ENCODE measurements at regions of chr16 and their contacts with region 1.

Region 1: DNA sequence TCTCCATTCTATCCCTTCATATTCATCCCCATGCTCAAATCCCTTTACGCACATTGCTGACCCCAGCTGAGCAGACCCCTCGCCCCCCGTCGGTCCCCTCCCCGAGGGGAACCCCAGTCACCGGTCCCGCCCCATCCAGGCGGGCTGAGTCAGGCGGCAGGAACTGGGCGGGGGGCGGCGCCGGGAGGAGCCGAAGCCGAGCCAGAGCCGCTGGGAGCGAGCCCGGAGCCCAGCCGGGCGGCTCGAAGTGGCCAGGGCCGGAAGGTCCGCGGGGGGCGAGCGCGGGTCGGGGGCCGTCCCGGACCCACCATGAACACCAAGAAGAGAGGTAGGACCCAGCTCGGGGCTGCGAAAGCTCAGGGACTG is 8.6 kb downstream of the RIPOR1 start:
- DNase-seq: peak; percentile 62
- ATAC-seq: peak; percentile 56
- H3K4me3 Mint-ChIP-seq: peak overlapping the region; percentile 76
- H3K27ac Mint-ChIP-seq: no peak overlapping the region
- H3K4me1 Mint-ChIP-seq: peaks cover 14% of the 10 kb centered on the region
- H3K27me3 Mint-ChIP-seq: peaks cover 96% of the 10 kb centered on the region
- CTCF ChIP-seq: no peak

Region 2: GRCh38 chr16:67571981-67572431 is 34.8 kb after region 1 on chr16:
- CTCF ChIA-PET with region 1: no interaction called
- POLR2A ChIA-PET with region 1: no interaction called
- DNase-seq: no peak
- ATAC-seq: no peak
- H3K4me3 Mint-ChIP-seq: no peak overlapping the region
- H3K27ac Mint-ChIP-seq: no peak overlapping the region
- H3K4me1 Mint-ChIP-seq: peaks cover 3% of the 10 kb centered on the region; the same call in 1 of the 2 replicates
- H3K27me3 Mint-ChIP-seq: no peaks in the 10 kb centered on the region
- CTCF ChIP-seq: no peak

Region 3: GRCh38 chr16:67595033-67595355 is 57.7 kb after region 1 on chr16:
- CTCF ChIA-PET with region 1: no interaction called
- POLR2A ChIA-PET with region 1: no interaction called
- DNase-seq: no peak
- ATAC-seq: peak; percentile 38
- H3K4me3 Mint-ChIP-seq: peak overlapping the region; percentile 43
- H3K27ac Mint-ChIP-seq: peak overlapping the region; percentile 89
- H3K4me1 Mint-ChIP-seq: peaks cover 54% of the 10 kb centered on the region
- H3K27me3 Mint-ChIP-seq: no peaks in the 10 kb centered on the region
- CTCF ChIP-seq: no peak

Region 4: GRCh38 chr16:67660564-67661028 is 123.3 kb after region 1 on chr16 and contains the start of gene PARD6A:
- CTCF ChIA-PET with region 1: interaction called, 11 read pairs
- POLR2A ChIA-PET with region 1: no interaction called
- DNase-seq: peak; percentile 96
- ATAC-seq: peak; percentile 72
- H3K4me3 Mint-ChIP-seq: peak within 1 kb of the TSS; percentile 91
- H3K27ac Mint-ChIP-seq: peak within 1 kb of the TSS; percentile 98
- H3K4me1 Mint-ChIP-seq: peaks cover 19% of the 10 kb centered on the region
- H3K27me3 Mint-ChIP-seq: peaks cover 5% of the 10 kb centered on the region
- CTCF ChIP-seq: no peak
- total RNA-seq, gene PARD6A: 17.1 to 18.5 TPM (median 17.4 TPM) in 3 replicates

Measured in WTC11 (cell line).